Transverse colon (tissue), 4 donors: ENCODE measurements at regions of chr11 and their contacts with region 1.

Region 1: DNA sequence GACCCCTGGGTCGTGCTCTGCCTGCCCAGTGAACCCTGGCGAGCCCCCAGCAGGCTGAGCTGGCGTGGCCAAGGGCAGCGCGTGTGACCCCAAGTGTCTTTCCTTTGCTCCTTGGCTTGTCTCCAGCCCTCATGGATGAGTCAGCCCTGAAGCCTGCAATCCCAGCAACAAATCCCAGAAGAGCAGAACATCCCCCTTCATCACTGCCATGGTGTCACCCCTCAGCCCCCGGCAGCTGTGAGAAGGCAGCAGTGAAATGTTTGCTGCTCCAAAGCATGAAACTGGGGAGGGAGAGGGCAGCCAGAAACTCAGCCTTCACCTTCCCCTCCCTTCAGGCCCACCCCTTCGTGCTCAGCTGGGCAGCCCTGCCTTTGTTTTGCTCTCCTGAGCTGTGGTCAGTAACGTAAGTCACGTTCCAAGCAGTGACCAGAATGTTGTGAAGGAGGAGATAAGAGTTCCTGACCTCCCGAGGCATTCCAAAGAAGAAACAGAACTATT is 29.8 kb downstream of the ADAMTS15 start:
- DNase-seq: peak; percentile 48
- H3K4me3 ChIP-seq: no peak overlapping the region
- H3K27ac ChIP-seq: peak overlapping the region; percentile 45 to 64 (median 60)
- H3K4me1 ChIP-seq: peaks cover 5 to 18% (median 17%) of the 10 kb centered on the region in 4 donors
- H3K27me3 ChIP-seq: no peaks in the 10 kb centered on the region
- CTCF ChIP-seq: no peak
- EP300 ChIP-seq: no peak
- POLR2A ChIP-seq: no peak

Region 2: GRCh38 chr11:130431337-130432200 is 46.7 kb before region 1 on chr11:
- in situ Hi-C with region 1: no loop called
- intact Hi-C with region 1: no loop called
- DNase-seq: peak; percentile 80
- H3K4me3 ChIP-seq: no peak overlapping the region
- H3K27ac ChIP-seq: no peak overlapping the region
- H3K4me1 ChIP-seq: peaks cover 5 to 24% (median 13%) of the 10 kb centered on the region in 4 donors
- H3K27me3 ChIP-seq: peaks cover 40% of the 10 kb centered on the region
- CTCF ChIP-seq: peak; percentile 64 to 80 (median 69)
- EP300 ChIP-seq: no peak
- POLR2A ChIP-seq: no peak

Region 3: GRCh38 chr11:131629925-131630540 is 1151.8 kb after region 1 on chr11:
- in situ Hi-C with region 1: no loop called
- intact Hi-C with region 1: loop called (anchors 5 kb)
- DNase-seq: no peak
- H3K4me3 ChIP-seq: no peak overlapping the region
- H3K27ac ChIP-seq: no peak overlapping the region
- H3K4me1 ChIP-seq: no peaks in the 10 kb centered on the region
- H3K27me3 ChIP-seq: no peaks in the 10 kb centered on the region
- CTCF ChIP-seq: no peak
- EP300 ChIP-seq: no peak
- POLR2A ChIP-seq: no peak